T-cell (primary cell): ENCODE measurements at regions of chr2 and their contacts with region 1.

Region 1: DNA sequence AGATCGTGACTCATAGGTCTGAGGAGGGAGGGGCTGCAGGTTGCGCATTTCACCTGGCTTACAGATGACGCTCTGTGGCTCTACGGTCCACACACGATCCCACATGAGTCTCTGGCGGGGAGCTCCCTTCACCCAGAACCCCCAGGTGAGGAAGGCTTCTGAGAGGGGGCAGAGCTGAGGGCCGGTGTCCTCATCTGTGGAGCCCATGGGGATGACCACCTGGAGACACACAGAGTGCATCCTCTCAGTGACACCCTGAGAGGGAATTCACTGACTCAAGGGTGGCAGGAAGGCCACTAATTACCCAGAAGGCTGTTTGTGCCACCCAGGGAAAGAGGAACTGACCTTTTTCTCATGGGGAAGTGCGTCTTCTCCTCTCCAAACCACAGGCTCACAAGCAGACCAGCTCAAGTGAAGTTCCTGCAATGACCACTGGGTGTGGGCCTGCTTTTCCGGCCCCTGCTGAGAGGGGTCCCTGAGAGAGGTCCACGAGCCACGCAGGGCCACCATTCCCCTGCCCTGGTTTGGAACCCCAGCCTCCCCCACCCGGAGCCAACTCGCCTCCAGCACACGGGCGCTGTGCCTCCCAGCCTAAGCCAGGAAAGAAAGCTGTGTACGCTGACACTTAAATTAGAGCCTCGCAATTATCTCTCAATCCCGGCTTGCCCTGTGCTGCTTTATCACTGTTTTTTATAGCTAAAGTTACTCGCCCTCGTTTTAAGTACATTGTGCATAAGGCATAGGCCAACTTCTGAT is 114.1 kb downstream of the BCL11A start:
- DNase-seq: peak in 15 of 35 experiments; percentile 2 to 51 (median 6)
- ATAC-seq: no peak
- H3K4me3 ChIP-seq: no peak overlapping the region
- H3K4me3 Mint-ChIP-seq: no peak overlapping the region
- H3K27ac ChIP-seq: no peak overlapping the region
- H3K27ac Mint-ChIP-seq: no peak overlapping the region
- H3K4me1 ChIP-seq: no peaks in the 10 kb centered on the region
- H3K4me1 Mint-ChIP-seq: peaks cover 0 to 3% (median 0%) of the 10 kb centered on the region in 3 donors
- H3K27me3 ChIP-seq: peaks cover 0 to 10% of the 10 kb centered on the region in 2 experiments
- H3K27me3 Mint-ChIP-seq: peaks cover 0 to 3% of the 10 kb centered on the region in 2 donors

Region 2: DNA sequence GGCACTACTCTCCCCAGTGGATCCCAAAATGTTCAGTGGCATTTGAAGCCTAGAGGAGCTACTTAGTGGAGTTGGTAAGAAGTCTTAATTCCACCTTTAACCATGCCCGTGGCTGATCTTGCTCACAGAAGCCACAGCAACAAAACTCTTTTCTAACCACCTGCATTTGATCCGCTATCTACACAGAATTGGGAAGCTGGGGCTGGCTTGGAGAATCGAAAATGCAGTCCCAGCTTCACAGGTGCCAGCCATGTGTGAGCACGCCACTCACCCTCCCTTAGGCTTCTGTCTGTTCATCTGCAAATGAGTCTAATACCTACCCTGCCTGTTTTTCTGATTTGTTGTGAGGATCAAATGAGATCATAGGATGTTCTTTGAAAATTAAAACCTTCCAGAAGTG is 68.6 kb before region 1 on chr2:
- CTCF ChIA-PET with region 1: no interaction called
- POLR2A ChIA-PET with region 1: interaction called in 1 of 2 experiments, 11 read pairs
- DNase-seq: no peak
- ATAC-seq: no peak
- H3K4me3 ChIP-seq: no peak overlapping the region
- H3K4me3 Mint-ChIP-seq: no peak overlapping the region
- H3K27ac ChIP-seq: no peak overlapping the region
- H3K27ac Mint-ChIP-seq: no peak overlapping the region
- H3K4me1 ChIP-seq: no peaks in the 10 kb centered on the region
- H3K4me1 Mint-ChIP-seq: peaks cover 0 to 3% (median 0%) of the 10 kb centered on the region in 3 donors
- H3K27me3 ChIP-seq: peaks cover 0 to 10% of the 10 kb centered on the region in 2 experiments
- H3K27me3 Mint-ChIP-seq: no peaks in the 10 kb centered on the region

Region 3: DNA sequence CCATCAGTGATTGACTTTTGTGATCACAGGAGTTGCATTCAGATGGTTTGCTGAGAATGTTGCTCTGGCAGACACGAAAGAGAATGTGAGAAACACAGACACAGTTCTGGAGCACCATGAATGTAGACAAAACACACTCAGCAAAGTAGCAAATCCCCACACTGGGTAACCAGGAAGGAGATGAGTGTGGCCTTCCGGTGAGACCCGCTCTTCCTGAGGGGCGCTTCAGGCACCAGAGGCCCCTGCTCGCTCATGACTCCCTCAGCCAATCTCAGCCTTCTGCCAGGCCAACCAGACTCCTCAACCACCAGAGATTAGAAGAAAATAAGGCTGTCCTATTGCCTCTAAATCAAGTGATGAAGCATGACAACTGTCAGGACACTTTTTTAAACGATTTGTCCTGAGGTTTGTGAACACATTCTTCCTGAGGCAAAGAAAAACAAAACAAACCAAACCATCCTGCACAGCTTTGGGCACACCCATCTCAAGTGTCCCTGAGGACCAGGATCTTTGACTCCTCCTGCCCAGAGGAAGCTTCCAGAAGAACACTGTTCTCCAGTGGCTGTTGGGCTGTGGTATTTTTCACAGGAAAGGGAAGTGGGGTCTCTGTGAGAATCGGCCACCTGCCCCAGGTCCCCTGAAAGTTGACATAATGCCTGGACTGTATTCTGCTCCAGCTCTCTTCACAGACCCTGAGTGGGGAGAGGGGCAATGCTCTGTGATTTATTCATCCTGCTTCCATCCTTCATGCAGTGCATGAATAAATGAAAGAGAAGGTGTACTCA is 38.7 kb before region 1 on chr2:
- CTCF ChIA-PET with region 1: no interaction called
- POLR2A ChIA-PET with region 1: no interaction called
- DNase-seq: no peak
- ATAC-seq: no peak
- H3K4me3 ChIP-seq: peak overlapping the region in 1 of 2 donors; percentile 18
- H3K4me3 Mint-ChIP-seq: no peak overlapping the region
- H3K27ac ChIP-seq: no peak overlapping the region
- H3K27ac Mint-ChIP-seq: no peak overlapping the region
- H3K4me1 ChIP-seq: peaks cover 0 to 3% of the 10 kb centered on the region in 2 experiments
- H3K4me1 Mint-ChIP-seq: peaks cover 3 to 6% (median 4%) of the 10 kb centered on the region in 3 donors
- H3K27me3 ChIP-seq: no peaks in the 10 kb centered on the region
- H3K27me3 Mint-ChIP-seq: peaks cover 0 to 3% of the 10 kb centered on the region in 2 donors